Gastrocnemius medialis (tissue), 4 donors: ENCODE measurements at regions of chr5 and their contacts with region 1.

Region 1: DNA sequence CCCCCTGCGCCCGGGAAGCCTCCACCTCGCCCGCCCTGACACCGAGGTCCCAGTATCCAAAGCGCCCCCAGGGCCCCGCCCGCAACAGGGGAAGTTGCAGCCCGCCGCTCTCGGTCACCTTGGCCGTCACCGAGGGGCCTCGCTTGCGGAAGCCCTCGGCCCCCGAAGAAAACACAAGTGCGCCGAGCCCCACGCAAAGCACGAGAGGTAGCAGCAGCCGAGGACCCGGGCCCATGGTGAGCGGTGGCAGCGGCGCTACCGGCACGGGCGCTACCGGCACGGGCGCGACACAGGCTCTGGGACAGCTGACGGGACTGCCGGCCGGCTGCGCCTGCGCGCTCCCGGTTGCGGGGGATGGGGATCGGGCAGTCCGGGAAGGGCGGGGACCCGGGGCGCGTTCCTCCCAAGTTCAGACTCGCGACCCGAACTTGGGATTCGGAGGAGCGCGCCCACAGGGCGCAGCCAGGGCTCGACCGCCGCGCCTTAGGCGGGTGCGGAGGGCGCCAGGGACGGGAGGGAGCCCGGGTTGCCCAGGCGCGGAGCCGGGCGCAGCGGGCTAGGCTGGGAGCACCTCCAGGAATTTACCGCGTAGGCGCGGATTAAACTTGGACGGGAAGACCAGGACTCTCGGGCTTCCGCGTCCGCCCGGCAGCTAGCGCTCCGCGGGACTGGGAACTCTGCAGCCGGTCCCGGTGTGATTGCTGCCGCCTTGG is at the start of gene PPIC:
- DNase-seq: peak; percentile 70 to 81
- ATAC-seq: peak; percentile 89 to 93
- H3K4me3 ChIP-seq: peak within 1 kb of the TSS; percentile 85 to 96 (median 93)
- H3K27ac ChIP-seq: peak within 1 kb of the TSS; percentile 87 to 95 (median 92)
- H3K4me1 ChIP-seq: peaks cover 10 to 15% of the 10 kb centered on the region in 2 donors
- H3K27me3 ChIP-seq: no peaks in the 10 kb centered on the region
- CTCF ChIP-seq: no peak
- POLR2A ChIP-seq: peak; percentile 66 to 70
- total RNA-seq, gene PPIC: 10.3 to 29.8 (median 20.2) TPM

Region 2: DNA sequence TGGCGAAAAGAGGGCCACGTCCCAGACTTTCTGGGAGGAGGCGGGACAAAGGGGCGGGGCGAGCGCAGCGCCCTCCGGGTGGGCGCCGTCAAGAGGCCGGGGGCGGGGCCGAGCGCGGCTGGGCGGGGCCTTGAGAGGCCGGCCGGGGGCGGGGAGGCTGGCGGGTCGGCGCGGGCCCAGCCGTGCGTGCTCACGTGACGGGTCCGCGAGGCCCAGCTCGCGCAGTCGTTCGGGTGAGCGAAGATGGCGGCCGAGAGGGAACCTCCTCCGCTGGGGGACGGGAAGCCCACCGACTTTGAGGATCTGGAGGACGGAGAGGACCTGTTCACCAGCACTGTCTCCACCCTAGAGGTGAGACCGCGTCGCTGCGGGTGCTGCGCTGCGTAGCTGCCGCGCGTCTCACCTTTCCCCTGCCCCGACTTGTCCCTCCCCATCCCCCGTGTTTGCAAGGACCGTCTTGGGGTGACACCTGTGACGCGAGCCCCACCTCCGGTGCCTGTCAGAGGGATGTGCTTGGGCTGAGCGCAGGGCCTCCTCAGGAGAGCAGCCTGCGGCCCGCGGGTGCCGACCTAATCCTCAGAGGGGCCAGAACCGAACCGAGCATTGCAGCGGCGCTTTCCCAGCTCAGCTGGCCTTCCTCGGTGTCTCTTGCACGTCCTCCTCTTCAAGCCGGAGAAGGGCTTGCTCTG is 261.5 kb before region 1 on chr5 and contains the start of gene SNX2:
- in situ Hi-C with region 1: no loop called
- intact Hi-C with region 1: loop called (anchors 2 kb)
- DNase-seq: peak; percentile 84 to 91
- ATAC-seq: peak; percentile 93 to 94
- H3K4me3 ChIP-seq: peak within 1 kb of the TSS; percentile 84 to 98 (median 89)
- H3K27ac ChIP-seq: peak within 1 kb of the TSS; percentile 83 to 95 (median 90)
- H3K4me1 ChIP-seq: peaks cover 21 to 30% of the 10 kb centered on the region in 2 donors
- H3K27me3 ChIP-seq: no peaks in the 10 kb centered on the region
- CTCF ChIP-seq: peak in 2 of 5 experiments; percentile 23 to 34
- POLR2A ChIP-seq: peak; percentile 80 to 84
- total RNA-seq, gene SNX2: 28.8 to 35.1 (median 32.0) TPM

Region 3: GRCh38 chr5:122845229-122846050 is 191.1 kb before region 1 on chr5 and contains the start of gene SNX24:
- in situ Hi-C with region 1: no loop called
- intact Hi-C with region 1: loop called (anchors 1 kb)
- DNase-seq: peak; percentile 60 to 81
- ATAC-seq: peak; percentile 88 to 90
- H3K4me3 ChIP-seq: peak within 1 kb of the TSS; percentile 88 to 96 (median 92)
- H3K27ac ChIP-seq: peak within 1 kb of the TSS; percentile 76 to 91 (median 86)
- H3K4me1 ChIP-seq: peaks cover 11 to 13% of the 10 kb centered on the region in 2 donors
- H3K27me3 ChIP-seq: no peaks in the 10 kb centered on the region
- CTCF ChIP-seq: no peak
- POLR2A ChIP-seq: peak; percentile 38 to 53
- total RNA-seq, gene SNX24: 6.9 to 17.8 (median 10.6) TPM

Region 4: GRCh38 chr5:123089914-123090670 is 53.5 kb after region 1 on chr5:
- in situ Hi-C with region 1: no loop called
- intact Hi-C with region 1: loop called (anchors 5 kb)
- DNase-seq: no peak
- ATAC-seq: peak in 1 of 2 donors; percentile 9
- H3K4me3 ChIP-seq: peak overlapping the region; percentile 53 to 74 (median 58)
- H3K27ac ChIP-seq: no peak overlapping the region
- H3K4me1 ChIP-seq: peaks cover 25 to 30% of the 10 kb centered on the region in 2 donors
- H3K27me3 ChIP-seq: peaks cover 94 to 96% (median 96%) of the 10 kb centered on the region in 3 donors
- CTCF ChIP-seq: no peak
- POLR2A ChIP-seq: no peak

Region 5: DNA sequence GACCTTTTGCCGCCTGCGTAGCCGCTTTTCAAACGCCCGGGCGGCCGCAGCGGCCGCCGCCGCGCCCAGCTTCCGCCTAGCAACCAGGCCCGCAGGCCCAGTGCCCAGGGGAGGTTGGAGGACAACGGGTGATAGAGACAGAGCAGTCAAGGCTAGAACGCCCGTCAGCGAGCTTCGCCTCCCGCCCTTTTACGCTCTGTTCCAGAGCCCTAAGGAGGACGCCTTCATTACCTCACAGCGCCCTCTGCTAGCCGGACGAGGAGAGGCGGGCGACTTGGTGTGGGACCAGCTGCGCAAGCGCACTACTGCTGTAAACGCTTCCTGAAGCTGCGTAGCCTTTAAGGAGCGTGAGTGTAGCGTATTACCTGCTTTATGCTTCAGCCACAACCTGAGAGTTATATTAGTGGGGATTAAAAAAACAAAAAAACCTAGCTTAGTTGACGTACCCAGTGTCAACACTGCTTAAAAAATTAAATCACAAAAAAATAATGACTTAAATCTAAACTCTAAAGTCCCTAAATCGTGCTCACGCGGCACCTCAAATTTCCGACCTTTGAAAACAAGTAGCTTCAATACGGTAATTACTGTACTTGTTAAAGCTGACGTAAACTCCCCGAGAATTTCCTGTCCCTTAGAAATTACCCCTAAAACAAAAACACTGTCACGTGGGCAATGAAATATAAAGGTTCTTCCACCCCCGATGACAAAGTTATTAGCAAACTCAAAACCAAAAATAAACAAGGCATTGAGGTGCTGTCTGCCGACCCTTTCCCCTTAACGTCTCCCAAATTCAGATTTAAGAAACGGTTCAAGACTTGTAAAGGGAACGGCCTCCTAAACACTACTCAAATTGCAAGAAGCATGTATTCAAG is 387.0 kb after region 1 on chr5 and contains the start of gene CEP120:
- in situ Hi-C with region 1: no loop called
- intact Hi-C with region 1: loop called (anchors 2 kb)
- DNase-seq: peak; percentile 97 to 99
- ATAC-seq: peak; percentile 98 to 99
- H3K4me3 ChIP-seq: peak within 1 kb of the TSS; percentile 81 to 98 (median 89)
- H3K27ac ChIP-seq: peak within 1 kb of the TSS; percentile 86 to 91 (median 87)
- H3K4me1 ChIP-seq: peaks cover 9 to 11% of the 10 kb centered on the region in 2 donors
- H3K27me3 ChIP-seq: no peaks in the 10 kb centered on the region
- CTCF ChIP-seq: peak in 4 of 5 experiments; percentile 52 to 78 (median 70)
- POLR2A ChIP-seq: peak; percentile 48 to 67
- total RNA-seq, gene CEP120: 3.9 to 7.8 (median 7.6) TPM